Caco-2 (cell line): ENCODE measurements at regions of chr20 and their contacts with region 1.

Region 1: DNA sequence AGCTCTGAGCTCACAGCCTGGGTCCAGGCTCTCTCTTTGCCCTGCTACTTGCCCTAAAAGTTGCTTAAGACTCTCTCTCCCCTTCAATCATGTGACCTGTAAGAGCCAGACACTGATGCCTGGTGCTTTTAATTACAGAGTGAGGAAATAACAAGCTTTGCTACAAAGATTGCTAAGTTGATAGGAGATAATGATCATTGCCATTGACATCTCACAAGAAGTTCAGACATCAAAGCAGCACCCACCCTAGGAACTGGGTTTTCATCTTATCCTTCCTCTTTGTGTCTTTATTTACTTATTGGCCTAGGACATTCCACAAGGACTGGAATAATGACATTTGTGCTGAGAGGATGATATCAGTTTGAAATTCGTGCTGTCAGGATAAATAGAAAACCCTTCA is 125.9 kb upstream of the CD93 start:
- DNase-seq: peak; percentile 72 to 77
- H3K4me3 ChIP-seq: no peak overlapping the region
- H3K4me3 Mint-ChIP-seq: peak overlapping the region; percentile 13
- H3K27ac Mint-ChIP-seq: peak overlapping the region; percentile 88
- H3K4me1 ChIP-seq: peaks cover 21% of the 10 kb centered on the region
- H3K4me1 Mint-ChIP-seq: peaks cover 34% of the 10 kb centered on the region
- H3K27me3 ChIP-seq: no peaks in the 10 kb centered on the region
- H3K27me3 Mint-ChIP-seq: no peaks in the 10 kb centered on the region
- CTCF ChIP-seq: no peak

Region 2: DNA sequence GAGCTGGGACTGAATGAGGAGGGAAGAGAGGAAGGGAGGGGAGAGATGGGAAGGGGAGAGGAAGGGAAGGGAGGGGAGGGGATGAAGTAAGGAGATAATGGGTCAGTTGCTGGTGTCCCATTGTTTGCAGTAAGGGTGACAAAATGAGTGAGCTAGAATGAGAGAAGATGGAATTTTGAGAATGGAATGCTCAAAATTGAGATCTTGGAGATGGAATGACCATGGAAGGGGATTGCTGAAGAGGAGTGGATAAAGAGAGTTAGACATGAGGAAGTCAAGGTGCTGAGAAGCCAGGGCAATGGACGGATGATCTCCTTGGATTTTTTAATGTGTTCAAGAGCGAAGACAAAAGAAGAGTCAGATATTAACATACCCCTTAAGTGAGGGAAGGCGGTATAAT is 257.4 kb before region 1 on chr20:
- CTCF ChIA-PET with region 1: interaction called, 11 read pairs
- POLR2A ChIA-PET with region 1: no interaction called
- intact Hi-C with region 1: no loop called
- DNase-seq: no peak
- H3K4me3 ChIP-seq: no peak overlapping the region
- H3K4me3 Mint-ChIP-seq: no peak overlapping the region
- H3K27ac Mint-ChIP-seq: no peak overlapping the region
- H3K4me1 ChIP-seq: no peaks in the 10 kb centered on the region
- H3K4me1 Mint-ChIP-seq: no peaks in the 10 kb centered on the region
- H3K27me3 ChIP-seq: no peaks in the 10 kb centered on the region
- H3K27me3 Mint-ChIP-seq: no peaks in the 10 kb centered on the region
- CTCF ChIP-seq: no peak

Region 3: DNA sequence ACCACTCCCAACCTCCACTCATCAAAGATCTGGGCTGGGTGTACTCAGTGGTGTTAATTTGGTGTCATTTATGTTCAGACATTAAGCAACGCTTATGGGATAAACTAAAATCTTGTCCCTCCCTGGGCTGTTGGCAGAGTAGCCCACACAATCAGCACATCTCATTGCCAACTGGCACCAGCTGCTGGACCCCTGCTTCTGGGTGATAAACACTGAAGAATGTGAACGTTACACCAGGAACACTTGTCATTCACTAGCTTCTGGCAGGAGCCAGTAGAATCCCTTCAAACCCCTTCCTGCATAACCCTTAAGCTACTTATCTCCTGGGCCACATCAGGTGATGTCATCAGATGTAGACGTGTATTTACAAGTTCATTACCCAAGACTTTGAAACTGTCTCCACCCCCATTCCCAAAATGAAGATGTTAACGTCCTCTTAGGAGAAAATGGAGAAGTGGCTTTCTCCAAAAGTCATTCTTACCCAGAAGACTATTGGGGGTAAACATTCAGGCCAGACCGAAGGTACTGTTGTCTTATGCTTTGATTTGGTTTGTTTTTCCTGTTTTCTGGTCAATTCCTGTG is 18.2 kb before region 1 on chr20:
- CTCF ChIA-PET with region 1: no interaction called
- POLR2A ChIA-PET with region 1: no interaction called
- intact Hi-C with region 1: no loop called
- DNase-seq: no peak
- H3K4me3 ChIP-seq: no peak overlapping the region
- H3K4me3 Mint-ChIP-seq: no peak overlapping the region
- H3K27ac Mint-ChIP-seq: no peak overlapping the region
- H3K4me1 ChIP-seq: no peaks in the 10 kb centered on the region
- H3K4me1 Mint-ChIP-seq: peaks cover 9% of the 10 kb centered on the region
- H3K27me3 ChIP-seq: no peaks in the 10 kb centered on the region
- H3K27me3 Mint-ChIP-seq: no peaks in the 10 kb centered on the region
- CTCF ChIP-seq: no peak

Region 4: DNA sequence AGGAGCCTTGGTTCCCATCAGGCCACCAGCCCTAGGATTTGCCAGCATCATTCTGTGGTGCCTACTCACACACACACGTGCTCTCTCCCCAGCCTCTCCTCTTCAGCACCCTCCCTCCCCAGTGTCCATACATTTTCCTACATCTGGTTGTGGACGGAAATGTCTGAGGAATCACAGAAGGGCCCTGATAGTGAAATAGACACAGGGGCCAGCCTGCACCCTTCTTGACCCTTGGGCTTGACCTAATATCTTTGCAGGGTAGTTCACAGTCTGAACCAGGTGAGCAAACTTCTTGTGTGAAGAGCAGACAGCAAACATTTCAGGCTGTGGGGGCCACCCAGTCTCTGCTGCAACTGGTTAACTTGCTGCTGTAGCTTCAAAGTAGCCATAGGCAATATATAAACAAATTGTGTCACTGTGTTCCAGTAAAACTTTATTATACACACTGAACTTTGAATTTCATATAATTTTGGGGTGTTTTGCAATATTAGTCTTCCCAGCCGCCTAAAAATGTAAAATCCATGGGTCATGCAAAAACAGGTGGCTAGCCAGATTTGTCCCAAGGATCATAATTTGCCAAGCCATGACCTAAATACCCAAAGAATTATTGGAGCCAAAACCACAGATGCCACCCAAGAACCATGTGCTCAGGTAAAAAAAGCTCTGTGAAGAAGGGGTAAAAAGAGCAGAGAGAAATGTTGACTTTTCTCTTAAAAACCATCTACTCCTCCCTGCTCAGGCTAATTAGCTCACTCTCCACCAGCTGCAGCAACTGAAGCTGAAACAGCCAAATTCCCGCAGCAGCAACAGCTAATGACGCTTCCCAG is 30.3 kb after region 1 on chr20:
- CTCF ChIA-PET with region 1: no interaction called
- POLR2A ChIA-PET with region 1: no interaction called
- intact Hi-C with region 1: loop called (anchors 1 kb)
- DNase-seq: peak; percentile 48 to 55
- H3K4me3 ChIP-seq: no peak overlapping the region
- H3K4me3 Mint-ChIP-seq: no peak overlapping the region
- H3K27ac Mint-ChIP-seq: no peak overlapping the region
- H3K4me1 ChIP-seq: no peaks in the 10 kb centered on the region; the same call in 1 of the 2 replicates
- H3K4me1 Mint-ChIP-seq: peaks cover 8% of the 10 kb centered on the region
- H3K27me3 ChIP-seq: no peaks in the 10 kb centered on the region
- H3K27me3 Mint-ChIP-seq: no peaks in the 10 kb centered on the region
- CTCF ChIP-seq: no peak

Region 5: GRCh38 chr20:23425129-23425528 is 213.1 kb after region 1 on chr20:
- CTCF ChIA-PET with region 1: no interaction called
- POLR2A ChIA-PET with region 1: no interaction called
- intact Hi-C with region 1: no loop called
- DNase-seq: no peak
- H3K4me3 ChIP-seq: no peak overlapping the region
- H3K4me3 Mint-ChIP-seq: peak overlapping the region; percentile 22
- H3K27ac Mint-ChIP-seq: no peak overlapping the region
- H3K4me1 ChIP-seq: peaks cover 4% of the 10 kb centered on the region; the same call in 1 of the 2 replicates
- H3K4me1 Mint-ChIP-seq: peaks cover 5% of the 10 kb centered on the region
- H3K27me3 ChIP-seq: no peaks in the 10 kb centered on the region
- H3K27me3 Mint-ChIP-seq: no peaks in the 10 kb centered on the region
- CTCF ChIP-seq: no peak